ENCODE measurements at regions of chr1 and their contacts with region 1.

Region 1: DNA sequence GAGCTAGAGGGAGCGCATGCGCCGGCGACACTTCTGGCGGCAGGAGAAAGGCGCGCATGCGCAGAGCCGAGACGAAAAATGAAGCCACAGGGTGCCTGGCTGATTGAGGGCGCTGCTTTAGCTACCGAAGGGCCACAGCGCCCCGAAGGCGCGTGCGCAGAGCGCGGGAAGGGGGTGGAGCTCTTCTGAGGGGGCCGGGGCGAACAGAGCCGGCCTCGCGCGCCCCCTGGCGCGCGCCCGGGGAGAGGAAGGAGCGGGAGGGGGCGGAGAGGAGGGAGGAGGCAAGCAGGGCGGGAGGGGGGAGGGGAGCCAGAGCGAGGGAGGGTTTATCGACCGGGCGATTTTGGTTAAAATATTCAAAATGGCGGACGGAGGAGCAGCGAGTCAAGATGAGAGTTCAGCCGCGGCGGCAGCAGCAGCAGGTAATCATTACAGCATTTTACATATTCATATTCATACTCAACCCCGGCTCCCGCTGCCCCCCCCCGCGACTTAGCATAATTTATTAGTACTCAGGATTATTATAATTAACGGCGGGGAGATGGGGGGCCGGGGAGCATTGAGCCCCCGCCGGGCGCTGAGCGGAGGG is at the start of gene POU2F1:
- DNase-seq: peak; percentile 99
- ATAC-seq: peak; percentile 87
- H3K4me3 Mint-ChIP-seq: peak within 1 kb of the TSS; percentile 91
- H3K27ac Mint-ChIP-seq: peak within 1 kb of the TSS; percentile 95
- H3K4me1 Mint-ChIP-seq: peaks cover 30% of the 10 kb centered on the region
- H3K27me3 Mint-ChIP-seq: no peaks in the 10 kb centered on the region
- total RNA-seq, gene POU2F1: 22.7 to 23.3 TPM

Region 2: GRCh38 chr1:166875734-166876539 is 344.7 kb before region 1 on chr1 and contains the start of gene TADA1:
- CTCF ChIA-PET with region 1: interaction called, 11 read pairs
- POLR2A ChIA-PET with region 1: interaction called, 4 read pairs
- DNase-seq: peak; percentile 99
- ATAC-seq: peak; percentile 92
- H3K4me3 Mint-ChIP-seq: peak within 1 kb of the TSS; percentile 98
- H3K27ac Mint-ChIP-seq: peak within 1 kb of the TSS; percentile 99
- H3K4me1 Mint-ChIP-seq: peaks cover 46% of the 10 kb centered on the region
- H3K27me3 Mint-ChIP-seq: peaks cover 4% of the 10 kb centered on the region
- total RNA-seq, gene TADA1: 12.9 to 13.6 TPM

Region 3: DNA sequence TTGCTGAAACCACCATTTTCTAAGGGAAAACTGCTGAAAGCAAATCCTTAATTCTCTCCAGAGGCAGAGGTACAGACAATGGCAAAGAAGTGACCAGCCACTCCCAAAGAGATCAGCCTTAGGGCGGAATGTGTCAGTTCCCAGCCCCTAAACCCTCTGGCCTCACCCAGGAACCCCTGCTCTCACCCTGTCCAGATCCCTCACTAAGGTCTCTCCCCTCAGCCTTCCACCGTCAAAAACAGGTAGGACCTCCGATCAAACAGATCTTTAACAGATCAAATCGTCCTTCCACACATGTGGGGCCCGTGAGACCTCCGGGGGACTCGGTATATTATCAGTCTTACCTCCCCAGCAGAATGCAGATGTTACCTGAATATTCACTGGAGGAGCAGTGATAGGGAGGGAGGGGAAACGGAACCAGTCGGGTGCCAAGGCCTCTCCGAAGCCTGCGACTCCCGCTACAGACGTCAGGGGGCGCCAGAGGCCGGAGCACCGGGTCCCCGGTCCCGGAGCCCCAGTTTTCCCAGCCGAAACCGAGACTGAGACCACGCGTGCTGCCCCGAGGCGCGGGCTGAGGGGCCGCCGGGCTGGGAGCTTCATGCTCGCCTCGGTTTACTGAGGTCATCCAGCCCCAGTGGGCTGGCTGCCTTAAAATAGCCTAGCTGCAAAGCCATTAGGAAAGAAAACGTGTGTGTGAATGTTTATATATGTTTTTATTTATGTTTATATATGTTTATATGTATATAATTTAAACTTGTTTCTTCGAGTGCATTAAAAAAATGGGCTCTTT is 154.1 kb before region 1 on chr1:
- CTCF ChIA-PET with region 1: interaction called, 11 read pairs
- POLR2A ChIA-PET with region 1: interaction called, 7 read pairs
- DNase-seq: peak; percentile 83
- ATAC-seq: peak; percentile 96
- H3K4me3 Mint-ChIP-seq: no peak overlapping the region
- H3K27ac Mint-ChIP-seq: no peak overlapping the region
- H3K4me1 Mint-ChIP-seq: no peaks in the 10 kb centered on the region
- H3K27me3 Mint-ChIP-seq: peaks cover 8% of the 10 kb centered on the region

Region 4: GRCh38 chr1:167121375-167122120 is 99.1 kb before region 1 on chr1:
- CTCF ChIA-PET with region 1: interaction called, 13 read pairs
- POLR2A ChIA-PET with region 1: interaction called, 4 read pairs
- DNase-seq: peak; percentile 33
- ATAC-seq: peak; percentile 88
- H3K4me3 Mint-ChIP-seq: peak overlapping the region; percentile 74
- H3K27ac Mint-ChIP-seq: no peak overlapping the region
- H3K4me1 Mint-ChIP-seq: peaks cover 9% of the 10 kb centered on the region
- H3K27me3 Mint-ChIP-seq: peaks cover 7% of the 10 kb centered on the region

Region 5: DNA sequence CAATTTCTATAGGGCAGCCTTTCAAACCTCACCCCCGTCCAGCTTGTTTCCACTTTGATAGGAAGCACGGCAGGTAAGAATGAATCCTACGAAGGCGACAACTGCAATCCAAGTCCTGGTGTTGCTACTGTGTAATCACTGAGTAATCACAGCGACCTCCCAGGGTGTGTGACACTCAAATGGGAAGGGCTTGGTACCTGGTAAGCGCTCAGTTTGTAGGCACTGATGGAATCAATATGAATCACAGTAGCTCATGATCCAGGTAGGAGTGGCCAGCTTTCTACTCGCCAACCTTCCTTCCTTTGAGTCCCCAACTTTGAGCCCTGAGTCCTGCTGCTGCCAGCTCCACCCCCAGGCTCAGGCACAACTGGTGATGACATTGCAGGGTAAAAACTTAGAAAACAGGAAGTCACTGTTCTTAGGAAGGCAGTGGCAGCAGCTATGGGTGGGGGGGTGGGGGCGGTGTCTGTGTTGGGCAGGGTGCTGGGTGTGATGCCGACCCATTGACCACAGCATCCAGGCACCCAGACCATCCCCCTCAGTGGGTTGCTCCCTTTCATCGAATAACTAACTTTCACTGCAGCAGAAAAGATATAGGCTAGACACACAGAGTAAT is 227.0 kb after region 1 on chr1:
- CTCF ChIA-PET with region 1: interaction called, 12 read pairs
- POLR2A ChIA-PET with region 1: interaction called, 5 read pairs
- DNase-seq: peak; percentile 83
- ATAC-seq: peak; percentile 75
- H3K4me3 Mint-ChIP-seq: peak overlapping the region; percentile 67
- H3K27ac Mint-ChIP-seq: peak overlapping the region; percentile 94
- H3K4me1 Mint-ChIP-seq: peaks cover 91% of the 10 kb centered on the region
- H3K27me3 Mint-ChIP-seq: no peaks in the 10 kb centered on the region